Mammary epithelial cell (primary cell): ENCODE measurements at regions of chr3 and their contacts with region 1.

Region 1: DNA sequence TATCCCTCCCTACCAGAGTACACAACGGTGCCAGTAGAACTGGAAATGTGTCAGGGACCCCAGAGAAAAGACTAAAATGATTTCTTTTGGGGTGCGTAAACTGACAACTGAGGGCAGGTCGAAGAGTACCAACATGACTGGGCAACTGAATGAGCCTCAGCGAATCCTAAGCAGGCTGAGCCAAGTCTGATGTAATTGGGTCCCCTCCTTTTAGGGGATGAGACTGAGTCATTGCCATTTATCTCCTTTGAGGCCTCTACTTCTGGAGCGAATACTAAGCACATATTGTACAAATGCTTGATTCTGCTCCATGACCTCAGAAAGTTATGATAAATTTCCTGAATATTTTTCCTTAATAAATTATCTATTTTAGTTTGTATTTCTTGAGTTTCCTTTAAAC is 17.3 kb upstream of the GPR156 start:
- DNase-seq: no peak
- H3K4me3 ChIP-seq: no peak overlapping the region
- H3K27ac ChIP-seq: no peak overlapping the region
- H3K4me1 ChIP-seq: no peaks in the 10 kb centered on the region
- H3K27me3 ChIP-seq: no peaks in the 10 kb centered on the region
- CTCF ChIP-seq: no peak

Region 2: DNA sequence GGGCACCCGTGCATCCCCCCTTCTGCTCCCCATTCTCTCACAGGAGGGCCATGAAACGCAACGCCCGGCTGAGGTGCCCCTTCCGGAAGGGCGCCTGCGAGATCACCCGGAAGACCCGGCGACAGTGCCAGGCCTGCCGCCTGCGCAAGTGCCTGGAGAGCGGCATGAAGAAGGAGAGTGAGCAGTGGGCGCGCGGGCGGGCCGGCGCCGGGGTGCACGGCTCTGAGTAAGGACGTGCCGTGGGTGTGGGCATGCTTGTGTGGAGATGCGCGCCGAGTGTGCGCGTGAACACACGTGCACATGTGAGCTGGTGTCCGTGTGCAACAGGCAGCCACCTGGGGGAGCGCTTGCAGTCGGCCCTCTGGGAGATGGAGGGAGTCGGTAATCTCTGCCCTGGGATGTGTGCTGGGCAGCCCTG is 492.3 kb before region 1 on chr3:
- CTCF ChIA-PET with region 1: interaction called, 15 read pairs
- dilution Hi-C with region 1: no loop called
- in situ Hi-C with region 1: no loop called
- intact Hi-C with region 1: no loop called
- DNase-seq: peak; percentile 19
- H3K4me3 ChIP-seq: peak overlapping the region in 2 of 3 experiments; percentile 34 to 40
- H3K27ac ChIP-seq: no peak overlapping the region
- H3K4me1 ChIP-seq: peaks cover 7% of the 10 kb centered on the region
- H3K27me3 ChIP-seq: peaks cover 2% of the 10 kb centered on the region
- CTCF ChIP-seq: peak in 1 of 2 donors; percentile 40